Activated T-helper 1 cell treated with anti-CD3 and anti-CD28 coated beads, Interleukin-12 subunit alpha, Interleukin-12 subunit beta, Interleukin-2, Interleukin-4 antibody, amounts not matched to agents 30 ng/mL and 10 ng/mL and 1 ng/mL, durations not matched to agents 14 hours and 24 hours and 36 hours (primary cell): ENCODE measurements at regions of chr1 and their contacts with region 1.

Region 1: DNA sequence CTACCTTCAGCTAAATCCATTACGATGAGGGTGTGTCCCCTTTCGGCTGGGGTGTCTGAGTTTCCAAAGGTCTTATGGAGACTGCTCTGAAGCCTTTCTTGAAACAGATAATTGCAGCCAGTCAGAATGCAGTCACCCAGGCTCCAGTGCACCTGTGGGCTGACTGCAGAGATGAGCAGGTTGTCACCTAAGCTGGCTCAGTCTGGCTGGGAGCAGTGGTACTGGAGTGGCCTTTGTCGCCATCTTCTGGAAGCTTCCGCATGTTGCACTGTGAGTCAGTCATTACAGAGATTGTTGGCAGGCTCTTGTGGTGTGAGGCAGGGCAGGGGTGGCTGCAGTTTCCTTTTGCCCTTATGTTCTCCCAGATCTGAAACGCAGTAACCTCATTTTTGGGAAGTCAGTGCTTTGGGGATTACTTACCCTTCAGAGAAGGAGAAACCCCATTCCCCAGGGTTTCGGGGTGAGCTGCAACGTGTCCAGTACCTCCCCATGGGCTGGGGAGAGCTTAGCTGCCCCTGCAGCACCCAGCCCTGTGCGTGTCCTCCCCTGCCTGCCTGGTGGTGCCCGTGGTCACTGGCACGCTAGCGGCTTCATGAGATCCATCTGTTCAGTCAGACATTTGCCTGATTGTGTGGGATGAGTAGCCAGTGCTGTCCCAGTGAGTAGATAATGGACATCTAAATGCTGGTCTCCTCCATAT is 48.0 kb downstream of the SMYD2 start:
- DNase-seq: peak; percentile 68
- H3K4me3 Mint-ChIP-seq: no peak overlapping the region
- H3K27ac Mint-ChIP-seq: no peak overlapping the region
- H3K4me1 Mint-ChIP-seq: peaks cover 15% of the 10 kb centered on the region
- H3K27me3 Mint-ChIP-seq: no peaks in the 10 kb centered on the region

Region 2: GRCh38 chr1:213244664-213245091 is 1084.2 kb before region 1 on chr1:
- intact Hi-C with region 1: loop called (anchors 5 kb)
- DNase-seq: no peak
- H3K4me3 Mint-ChIP-seq: no peak overlapping the region
- H3K27ac Mint-ChIP-seq: no peak overlapping the region
- H3K4me1 Mint-ChIP-seq: no peaks in the 10 kb centered on the region
- H3K27me3 Mint-ChIP-seq: no peaks in the 10 kb centered on the region

Region 3: DNA sequence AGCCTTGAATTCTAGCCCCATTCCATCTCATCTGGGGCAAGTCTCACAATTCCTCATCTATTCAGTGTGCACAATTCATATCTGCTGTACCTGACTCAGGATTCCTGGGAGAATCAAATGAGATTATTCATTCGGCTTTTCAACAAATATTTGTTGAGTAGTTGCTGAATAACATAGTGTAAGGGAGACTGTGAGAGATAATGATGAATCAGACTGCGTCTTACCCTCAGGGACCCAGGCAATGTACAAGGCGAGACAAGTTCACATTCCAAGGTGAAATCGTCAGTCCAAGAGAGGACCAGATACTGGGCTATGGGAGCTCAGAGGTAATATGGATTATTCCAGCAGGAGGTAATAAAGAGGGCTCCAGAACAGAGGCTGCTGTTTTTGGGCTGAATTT is 115.8 kb before region 1 on chr1:
- intact Hi-C with region 1: loop called (anchors 1 kb)
- DNase-seq: no peak
- H3K4me3 Mint-ChIP-seq: no peak overlapping the region
- H3K27ac Mint-ChIP-seq: no peak overlapping the region
- H3K4me1 Mint-ChIP-seq: no peaks in the 10 kb centered on the region
- H3K27me3 Mint-ChIP-seq: peaks cover 20% of the 10 kb centered on the region

Region 4: DNA sequence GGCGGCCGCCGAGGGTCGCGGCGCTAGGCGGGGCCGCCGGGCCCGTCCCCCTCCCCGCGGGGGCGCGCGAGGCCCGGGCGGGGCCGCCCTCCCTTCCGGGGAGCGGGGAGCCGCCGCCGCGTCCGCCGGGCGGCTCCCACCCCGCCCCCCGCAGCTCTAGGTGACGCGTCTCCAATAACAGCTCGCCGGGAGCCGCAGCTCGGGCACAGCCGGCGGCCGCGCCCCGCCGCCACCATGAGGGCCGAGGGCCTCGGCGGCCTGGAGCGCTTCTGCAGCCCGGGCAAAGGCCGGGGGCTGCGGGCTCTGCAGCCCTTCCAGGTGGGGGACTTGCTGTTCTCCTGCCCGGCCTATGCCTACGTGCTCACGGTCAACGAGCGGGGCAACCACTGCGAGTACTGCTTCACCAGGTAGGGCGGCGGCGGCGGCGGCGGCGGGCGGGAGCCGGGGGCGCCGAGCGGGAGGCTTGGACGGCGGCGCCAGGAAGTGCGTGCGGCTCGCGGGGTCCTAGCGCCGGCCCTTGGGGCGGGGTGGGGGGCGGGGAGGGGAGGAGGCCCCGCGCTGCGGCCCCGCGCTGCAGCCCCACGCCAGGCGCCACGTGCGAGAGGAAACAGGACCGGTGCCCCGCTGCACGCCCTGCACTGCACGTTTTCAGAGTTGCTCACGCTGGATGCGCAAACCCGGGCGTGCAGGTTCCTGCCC is 47.8 kb before region 1 on chr1 and contains the start of gene SMYD2:
- intact Hi-C with region 1: loop called (anchors 5 kb)
- DNase-seq: peak; percentile 59
- H3K4me3 Mint-ChIP-seq: peak within 1 kb of the TSS; percentile 94
- H3K27ac Mint-ChIP-seq: peak within 1 kb of the TSS; percentile 92
- H3K4me1 Mint-ChIP-seq: peaks cover 42% of the 10 kb centered on the region
- H3K27me3 Mint-ChIP-seq: peaks cover 2% of the 10 kb centered on the region
- total RNA-seq, gene SMYD2: 25.7 and 26.8 TPM in 2 replicates

Region 5: GRCh38 chr1:214439352-214440119 is 110.6 kb after region 1 on chr1:
- intact Hi-C with region 1: loop called (anchors 2 kb)
- DNase-seq: peak; percentile 52
- H3K4me3 Mint-ChIP-seq: peak overlapping the region; percentile 66
- H3K27ac Mint-ChIP-seq: peak overlapping the region; percentile 95
- H3K4me1 Mint-ChIP-seq: peaks cover 64% of the 10 kb centered on the region
- H3K27me3 Mint-ChIP-seq: no peaks in the 10 kb centered on the region

Region 6: DNA sequence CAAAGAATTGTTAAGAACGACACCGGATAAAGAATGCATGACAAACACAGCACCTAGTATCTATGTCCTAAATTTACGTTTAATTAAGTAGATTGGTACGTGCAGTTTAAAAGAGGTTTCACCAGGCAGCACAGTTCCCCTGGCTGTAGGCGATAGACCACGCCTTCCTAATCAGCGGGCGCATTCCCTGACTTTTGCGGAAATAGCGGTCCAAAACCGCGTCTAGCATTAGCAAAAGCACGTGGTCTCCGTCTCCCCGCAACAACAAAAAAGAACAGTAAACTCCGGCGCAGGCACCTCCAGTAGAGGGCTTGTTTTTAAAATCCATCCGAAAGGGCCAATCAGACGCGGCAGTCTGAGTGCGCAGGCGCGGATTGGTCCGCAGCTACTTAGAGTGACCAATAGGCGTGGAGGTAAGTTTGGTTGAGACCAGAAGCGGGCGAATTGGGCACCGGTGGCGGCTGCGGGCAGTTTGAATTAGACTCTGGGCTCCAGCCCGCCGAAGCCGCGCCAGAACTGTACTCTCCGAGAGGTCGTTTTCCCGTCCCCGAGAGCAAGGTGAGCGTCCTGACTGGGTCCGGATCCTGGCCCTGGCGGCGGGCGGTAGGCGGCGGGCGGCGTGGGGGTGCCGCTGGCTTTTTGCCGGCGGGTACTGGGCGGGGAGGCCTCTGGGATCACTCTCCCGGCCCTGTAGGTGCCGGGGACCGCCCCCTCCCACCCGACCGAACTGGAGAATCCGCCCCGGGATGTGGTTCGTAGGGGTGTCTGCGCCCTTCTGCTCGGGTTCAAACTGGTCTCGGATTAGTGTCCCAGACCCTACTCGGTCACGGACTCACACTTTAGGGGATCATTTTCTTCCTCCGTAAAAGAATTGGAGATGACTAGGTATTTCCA is 274.1 kb after region 1 on chr1 and contains the start of gene CENPF:
- intact Hi-C with region 1: loop called (anchors 1 kb)
- DNase-seq: peak; percentile 94
- H3K4me3 Mint-ChIP-seq: peak within 1 kb of the TSS; percentile 93
- H3K27ac Mint-ChIP-seq: peak within 1 kb of the TSS; percentile 94
- H3K4me1 Mint-ChIP-seq: peaks cover 17% of the 10 kb centered on the region
- H3K27me3 Mint-ChIP-seq: no peaks in the 10 kb centered on the region
- total RNA-seq, gene CENPF: 51.7 and 52.3 TPM in 2 replicates